Activated CD4-positive, alpha-beta T cell treated with anti-CD3 and anti-CD28 coated beads, Interleukin-2, amount 10 ng/mL, durations not matched to agents 24 days and 14 days (primary cell): ENCODE measurements at regions of chr11 and their contacts with region 1.

Region 1: DNA sequence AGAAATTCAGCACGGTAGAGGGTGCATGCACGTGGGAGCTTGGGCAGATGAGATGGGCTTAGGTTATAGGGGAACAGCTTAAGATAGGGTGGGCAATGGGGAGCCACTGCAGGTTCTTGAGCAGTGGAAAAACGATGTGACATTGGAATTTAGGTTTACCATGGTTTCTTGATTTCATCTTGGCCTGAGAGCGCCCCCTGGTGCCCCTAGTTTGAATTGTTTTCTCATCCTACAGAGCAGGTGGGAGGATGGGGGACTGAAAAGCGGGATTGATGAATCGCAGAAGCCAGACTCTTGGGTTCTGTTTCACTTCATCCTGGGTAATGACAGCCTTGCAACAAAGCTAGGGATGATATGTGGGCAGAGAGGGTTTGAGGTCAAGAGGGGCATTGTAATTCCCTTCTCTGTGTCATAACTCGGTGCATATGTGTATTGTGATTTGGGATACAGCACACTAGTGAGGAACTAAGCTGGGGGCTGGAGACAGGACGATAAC is 6.7 kb upstream of the MCAM start:
- DNase-seq: peak; percentile 94
- H3K4me3 Mint-ChIP-seq: no peak overlapping the region
- H3K27ac Mint-ChIP-seq: no peak overlapping the region
- H3K4me1 Mint-ChIP-seq: peaks cover 20% of the 10 kb centered on the region
- H3K27me3 Mint-ChIP-seq: peaks cover 9% of the 10 kb centered on the region

Region 2: DNA sequence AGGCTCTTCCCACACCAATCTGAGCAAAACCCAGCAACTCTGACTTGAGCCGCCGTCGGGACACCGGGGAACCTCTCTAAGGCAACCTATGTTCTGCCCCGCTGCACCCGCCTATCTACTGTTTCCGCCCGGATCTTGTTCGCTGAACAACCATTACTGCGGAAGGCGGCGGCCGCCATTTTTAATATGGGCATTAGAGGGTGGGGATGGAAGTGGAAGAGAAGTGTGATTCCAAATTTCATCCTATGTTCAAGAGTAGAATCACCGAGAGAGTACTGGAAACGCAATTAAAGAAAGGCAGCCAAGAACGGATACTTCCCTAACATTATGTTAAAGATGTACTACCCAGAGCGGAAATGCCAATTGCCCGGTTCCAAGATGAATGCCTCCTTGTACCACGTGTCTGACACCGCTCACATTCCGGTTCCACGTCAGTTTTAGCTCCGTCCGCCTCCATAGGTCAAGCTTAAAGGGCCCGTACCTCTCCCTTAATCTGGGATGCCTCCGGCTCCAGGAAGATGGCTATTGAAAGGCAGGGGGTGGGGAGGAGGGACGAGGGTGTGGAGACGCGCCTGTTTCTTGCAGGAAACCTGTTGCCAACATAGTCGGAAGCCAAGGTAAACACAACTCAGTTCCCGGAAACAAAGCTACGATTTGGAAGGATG is 221.7 kb before region 1 on chr11 and contains the start of gene DPAGT1:
- intact Hi-C with region 1: loop called (anchors 5 kb)
- DNase-seq: peak; percentile 96
- H3K4me3 Mint-ChIP-seq: peak within 1 kb of the TSS; percentile 92
- H3K27ac Mint-ChIP-seq: peak within 1 kb of the TSS; percentile 99
- H3K4me1 Mint-ChIP-seq: peaks cover 40% of the 10 kb centered on the region
- H3K27me3 Mint-ChIP-seq: no peaks in the 10 kb centered on the region
- total RNA-seq, gene DPAGT1: 76.1 and 79.4 TPM in 2 replicates

Region 3: GRCh38 chr11:119168471-119169281 is 154.9 kb before region 1 on chr11 and contains the start of gene NLRX1:
- intact Hi-C with region 1: loop called (anchors 2 kb)
- DNase-seq: peak; percentile 95
- H3K4me3 Mint-ChIP-seq: peak within 1 kb of the TSS; percentile 94
- H3K27ac Mint-ChIP-seq: peak within 1 kb of the TSS; percentile 94
- H3K4me1 Mint-ChIP-seq: peaks cover 16% of the 10 kb centered on the region
- H3K27me3 Mint-ChIP-seq: no peaks in the 10 kb centered on the region
- total RNA-seq, gene NLRX1: 23.3 and 25.0 TPM in 2 replicates

Region 4: DNA sequence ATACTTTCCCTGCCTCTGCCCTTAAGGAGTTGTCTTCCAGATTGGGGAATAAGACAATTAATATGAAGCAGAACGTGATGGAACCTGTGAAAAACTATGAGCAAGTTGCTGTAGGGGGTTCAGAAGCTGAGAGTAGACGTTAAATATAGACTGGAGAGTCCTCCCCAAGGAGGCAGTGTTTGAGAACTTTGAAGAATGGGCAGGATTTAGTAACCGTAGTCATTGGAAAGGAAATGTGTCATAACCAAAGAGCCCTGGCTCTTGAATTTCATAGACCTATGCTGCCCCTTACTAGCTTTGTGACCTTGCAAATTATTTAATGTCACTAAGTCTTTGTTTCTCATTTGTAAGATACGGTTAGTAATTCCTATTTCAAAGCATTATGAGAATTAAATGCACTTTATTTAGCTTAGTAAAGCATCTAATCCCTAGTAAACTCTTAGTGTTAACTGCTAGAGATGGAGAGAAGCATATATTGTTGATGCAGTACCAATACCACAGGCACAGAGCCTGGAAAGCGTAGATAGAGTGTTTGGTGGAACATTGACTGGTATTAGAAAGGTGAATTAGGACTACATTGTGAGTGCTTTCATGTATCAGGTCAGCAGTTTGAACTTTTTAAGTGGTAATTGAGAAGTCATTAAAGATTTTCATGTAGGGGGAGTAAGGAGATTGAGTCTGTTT is 60.8 kb before region 1 on chr11:
- intact Hi-C with region 1: loop called (anchors 2 kb)
- DNase-seq: peak; percentile 75
- H3K4me3 Mint-ChIP-seq: no peak overlapping the region
- H3K27ac Mint-ChIP-seq: no peak overlapping the region
- H3K4me1 Mint-ChIP-seq: peaks cover 47% of the 10 kb centered on the region
- H3K27me3 Mint-ChIP-seq: no peaks in the 10 kb centered on the region

Region 5: GRCh38 chr11:119334174-119334930 is 10.8 kb after region 1 on chr11 and contains the start of gene RNF26:
- intact Hi-C with region 1: loop called (anchors 1 kb)
- DNase-seq: peak; percentile 99
- H3K4me3 Mint-ChIP-seq: peak within 1 kb of the TSS; percentile 95
- H3K27ac Mint-ChIP-seq: peak within 1 kb of the TSS; percentile 99
- H3K4me1 Mint-ChIP-seq: peaks cover 34% of the 10 kb centered on the region
- H3K27me3 Mint-ChIP-seq: peaks cover 23% of the 10 kb centered on the region
- total RNA-seq, gene RNF26: 26.5 and 26.8 TPM in 2 replicates

Region 6: DNA sequence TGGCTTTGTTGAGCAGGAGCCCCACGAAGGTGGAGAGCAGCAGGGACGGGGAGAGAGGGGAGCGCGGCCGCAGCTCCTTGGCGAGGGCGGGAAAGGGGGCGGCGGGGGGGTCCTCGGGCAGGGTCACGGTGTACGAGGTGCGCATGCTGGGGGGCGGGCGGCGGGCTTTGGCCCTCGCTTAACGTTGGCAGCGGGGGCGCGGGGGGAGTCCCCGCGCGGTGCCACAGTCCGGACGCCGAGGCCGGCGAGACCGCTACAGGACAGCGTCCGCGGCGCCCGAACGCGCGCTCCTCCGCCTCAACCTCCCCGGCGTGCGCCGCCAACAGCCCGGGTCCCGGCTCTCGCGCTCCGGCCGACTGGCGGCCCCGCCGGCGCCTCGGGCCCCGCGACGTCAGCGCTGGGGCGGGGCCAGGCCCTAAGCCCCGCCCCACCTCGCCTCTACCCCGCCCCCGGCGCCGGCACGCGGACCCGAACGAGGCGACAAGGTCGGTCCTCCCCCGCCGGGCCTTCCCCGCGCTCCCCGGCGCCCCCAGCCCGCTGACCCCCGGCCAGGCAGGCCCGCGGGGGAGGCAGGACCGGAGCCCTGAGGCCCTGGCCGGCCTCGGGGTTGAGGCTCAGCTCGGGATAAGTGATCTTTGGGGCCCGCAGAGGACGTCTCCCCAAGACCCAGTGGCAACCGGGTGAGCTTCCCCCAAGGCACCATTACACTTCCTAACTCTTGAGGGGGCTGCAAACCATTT is 40.4 kb after region 1 on chr11:
- intact Hi-C with region 1: no loop called
- DNase-seq: peak; percentile 90
- H3K4me3 Mint-ChIP-seq: peak overlapping the region; percentile 81
- H3K27ac Mint-ChIP-seq: no peak overlapping the region
- H3K4me1 Mint-ChIP-seq: peaks cover 7% of the 10 kb centered on the region
- H3K27me3 Mint-ChIP-seq: peaks cover 42% of the 10 kb centered on the region

Region 7: GRCh38 chr11:119391275-119391674 is 67.7 kb after region 1 on chr11:
- intact Hi-C with region 1: no loop called
- DNase-seq: no peak
- H3K4me3 Mint-ChIP-seq: no peak overlapping the region
- H3K27ac Mint-ChIP-seq: no peak overlapping the region
- H3K4me1 Mint-ChIP-seq: no peaks in the 10 kb centered on the region
- H3K27me3 Mint-ChIP-seq: peaks cover 24% of the 10 kb centered on the region